ENCODE measurements at regions of chr1 and their contacts with region 1.

Region 1: GRCh38 chr1:25031966-25032667 is 102.0 kb upstream of the RUNX3 start:
- DNase-seq: peak; percentile 70
- H3K4me3 Mint-ChIP-seq: peak overlapping the region; percentile 81
- H3K27ac Mint-ChIP-seq: peak overlapping the region; percentile 99
- H3K4me1 Mint-ChIP-seq: peaks cover 75% of the 10 kb centered on the region
- H3K27me3 Mint-ChIP-seq: no peaks in the 10 kb centered on the region

Region 2: GRCh38 chr1:24925082-24925779 is 106.9 kb before region 1 on chr1:
- CTCF ChIA-PET with region 1: interaction called, 144 read pairs
- intact Hi-C with region 1: loop called (anchors 1 kb)
- DNase-seq: peak; percentile 93
- H3K4me3 Mint-ChIP-seq: peak overlapping the region; percentile 94
- H3K27ac Mint-ChIP-seq: peak overlapping the region; percentile 77
- H3K4me1 Mint-ChIP-seq: peaks cover 70% of the 10 kb centered on the region
- H3K27me3 Mint-ChIP-seq: no peaks in the 10 kb centered on the region

Region 3: DNA sequence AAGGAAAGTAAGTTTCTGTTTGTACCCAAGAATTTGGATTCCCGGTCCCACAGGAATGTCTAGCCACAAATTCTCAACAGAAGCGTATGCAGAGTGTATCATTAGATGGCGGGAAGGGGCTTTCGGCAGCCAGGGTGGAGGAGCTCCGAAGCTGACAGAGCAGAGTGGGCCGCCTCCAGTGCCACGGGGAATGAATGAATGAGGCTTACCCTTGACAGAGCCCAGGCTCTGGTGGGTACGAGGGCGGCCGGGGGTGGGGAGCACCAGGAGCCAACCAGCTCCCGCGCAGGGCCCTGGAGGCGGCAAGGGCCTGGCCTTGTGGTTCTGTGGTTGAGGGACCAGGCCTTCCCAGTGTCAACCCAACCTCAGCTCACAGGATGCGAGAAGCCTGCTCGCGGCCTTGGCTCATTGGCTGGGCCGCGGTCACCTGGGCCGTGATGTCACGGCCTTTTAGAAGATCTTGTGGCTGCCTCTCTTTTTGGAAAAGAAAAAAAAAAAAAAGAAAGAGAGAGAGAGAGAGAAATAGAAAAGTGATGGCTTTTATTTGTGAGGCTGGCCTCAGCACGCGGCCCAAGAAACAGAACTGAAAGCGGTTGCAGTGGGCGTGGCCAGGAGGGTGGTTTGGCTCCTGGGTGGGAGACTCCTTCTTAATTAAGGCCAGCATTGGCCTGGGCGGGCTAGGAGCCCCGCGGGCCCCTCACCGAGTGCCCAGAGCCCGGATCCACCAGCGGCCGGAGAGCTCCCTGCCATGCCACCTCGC is 67.1 kb before region 1 on chr1:
- CTCF ChIA-PET with region 1: interaction called, 60 read pairs
- intact Hi-C with region 1: loop called (anchors 1 kb)
- DNase-seq: peak; percentile 97
- H3K4me3 Mint-ChIP-seq: peak overlapping the region; percentile 92
- H3K27ac Mint-ChIP-seq: peak overlapping the region; percentile 98
- H3K4me1 Mint-ChIP-seq: peaks cover 82% of the 10 kb centered on the region
- H3K27me3 Mint-ChIP-seq: no peaks in the 10 kb centered on the region

Region 4: GRCh38 chr1:25338188-25338981 is 306.3 kb after region 1 on chr1 and contains the start of gene TMEM50A:
- CTCF ChIA-PET with region 1: no interaction called
- intact Hi-C with region 1: loop called (anchors 5 kb)
- DNase-seq: peak; percentile 91
- H3K4me3 Mint-ChIP-seq: peak within 1 kb of the TSS; percentile 93
- H3K27ac Mint-ChIP-seq: peak within 1 kb of the TSS; percentile 93
- H3K4me1 Mint-ChIP-seq: peaks cover 28% of the 10 kb centered on the region
- H3K27me3 Mint-ChIP-seq: no peaks in the 10 kb centered on the region
- total RNA-seq, gene TMEM50A: 96.2 to 98.3 TPM

Region 5: GRCh38 chr1:26345718-26346549 is 1313.8 kb after region 1 on chr1:
- CTCF ChIA-PET with region 1: no interaction called
- intact Hi-C with region 1: no loop called
- DNase-seq: no peak
- H3K4me3 Mint-ChIP-seq: no peak overlapping the region
- H3K27ac Mint-ChIP-seq: no peak overlapping the region
- H3K4me1 Mint-ChIP-seq: no peaks in the 10 kb centered on the region
- H3K27me3 Mint-ChIP-seq: no peaks in the 10 kb centered on the region